Caco-2 (cell line): ENCODE measurements at regions of chr14 and their contacts with region 1.

Region 1: DNA sequence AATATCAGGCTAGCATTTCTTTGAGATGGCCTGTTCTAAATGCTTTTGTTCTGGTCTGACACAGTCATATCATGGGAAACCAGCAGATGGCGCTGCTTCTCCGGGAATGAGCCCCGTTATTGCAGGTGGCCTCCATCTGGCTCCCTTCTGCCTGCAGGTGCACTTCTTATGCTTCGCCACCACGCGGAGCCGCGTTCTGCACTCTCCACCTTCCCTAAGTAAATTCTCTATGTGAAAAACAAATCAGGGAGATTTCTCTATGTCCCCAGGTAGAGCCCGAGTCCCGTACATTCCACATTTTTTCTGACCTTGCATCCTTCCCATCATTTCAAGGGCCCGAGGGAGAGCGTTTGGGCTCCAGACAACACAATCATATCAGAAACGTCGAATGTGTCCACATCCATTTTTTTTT is 26.2 kb downstream of the GLRX5 start:
- DNase-seq: peak; percentile 86 to 91
- H3K4me3 ChIP-seq: no peak overlapping the region
- H3K4me3 Mint-ChIP-seq: no peak overlapping the region
- H3K27ac Mint-ChIP-seq: no peak overlapping the region
- H3K4me1 ChIP-seq: no peaks in the 10 kb centered on the region
- H3K4me1 Mint-ChIP-seq: no peaks in the 10 kb centered on the region
- H3K27me3 ChIP-seq: no peaks in the 10 kb centered on the region
- H3K27me3 Mint-ChIP-seq: no peaks in the 10 kb centered on the region
- CTCF ChIP-seq: peak; percentile 95 to 97

Region 2: DNA sequence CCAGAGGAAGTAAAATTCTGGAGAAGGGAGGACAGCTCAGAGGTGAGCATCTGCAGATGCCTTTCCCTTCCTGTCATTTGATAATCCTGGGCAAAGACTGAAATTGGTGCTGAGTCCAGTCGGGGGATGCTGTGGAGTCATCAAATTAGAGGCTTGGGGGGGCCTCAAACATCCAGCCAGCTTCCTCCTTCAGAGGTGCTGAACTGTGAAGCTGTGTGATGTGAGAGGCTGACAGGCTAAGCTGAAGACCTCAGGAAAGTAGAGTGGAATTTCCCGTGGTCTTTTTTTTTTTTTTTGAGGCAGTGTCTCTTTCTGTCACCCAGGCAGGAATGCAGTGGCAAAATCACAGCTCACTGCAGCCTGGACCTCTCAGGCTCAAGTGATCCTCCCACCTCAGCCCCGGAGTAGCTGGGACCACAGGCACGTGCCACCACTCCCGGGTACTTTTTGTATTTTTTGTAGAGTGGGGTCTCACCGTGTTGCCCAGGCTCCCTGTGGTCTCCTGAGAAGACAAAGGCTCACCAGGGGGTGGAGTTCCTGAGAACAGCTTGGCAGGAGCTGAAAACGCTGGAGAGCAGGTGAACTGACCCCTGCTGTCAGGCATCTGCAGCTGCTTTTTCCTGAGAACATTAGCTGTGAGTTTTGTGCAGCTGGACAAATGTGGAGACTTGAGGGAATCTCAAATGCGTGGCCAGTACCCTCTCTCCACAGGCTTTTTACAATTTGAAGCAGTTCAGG is 119.2 kb after region 1 on chr14:
- CTCF ChIA-PET with region 1: interaction called, 4 read pairs
- POLR2A ChIA-PET with region 1: no interaction called
- intact Hi-C with region 1: loop called (anchors 1 kb)
- DNase-seq: peak; percentile 44 to 49
- H3K4me3 ChIP-seq: no peak overlapping the region
- H3K4me3 Mint-ChIP-seq: no peak overlapping the region
- H3K27ac Mint-ChIP-seq: no peak overlapping the region
- H3K4me1 ChIP-seq: peaks cover 5% of the 10 kb centered on the region; the same call in 1 of the 2 replicates
- H3K4me1 Mint-ChIP-seq: no peaks in the 10 kb centered on the region
- H3K27me3 ChIP-seq: no peaks in the 10 kb centered on the region
- H3K27me3 Mint-ChIP-seq: peaks cover 12% of the 10 kb centered on the region
- CTCF ChIP-seq: peak; percentile 37 to 65

Region 3: GRCh38 chr14:95774265-95775160 is 213.5 kb after region 1 on chr14:
- CTCF ChIA-PET with region 1: interaction called, 3 read pairs
- POLR2A ChIA-PET with region 1: no interaction called
- intact Hi-C with region 1: loop called (anchors 1 kb)
- DNase-seq: peak; percentile 53 to 62
- H3K4me3 ChIP-seq: no peak overlapping the region
- H3K4me3 Mint-ChIP-seq: no peak overlapping the region
- H3K27ac Mint-ChIP-seq: no peak overlapping the region
- H3K4me1 ChIP-seq: no peaks in the 10 kb centered on the region
- H3K4me1 Mint-ChIP-seq: no peaks in the 10 kb centered on the region
- H3K27me3 ChIP-seq: no peaks in the 10 kb centered on the region
- H3K27me3 Mint-ChIP-seq: peaks cover 20% of the 10 kb centered on the region
- CTCF ChIP-seq: peak; percentile 75 to 79

Region 4: GRCh38 chr14:95850417-95850816 is 289.4 kb after region 1 on chr14:
- CTCF ChIA-PET with region 1: no interaction called
- POLR2A ChIA-PET with region 1: no interaction called
- intact Hi-C with region 1: no loop called
- DNase-seq: no peak
- H3K4me3 ChIP-seq: no peak overlapping the region
- H3K4me3 Mint-ChIP-seq: no peak overlapping the region
- H3K27ac Mint-ChIP-seq: no peak overlapping the region
- H3K4me1 ChIP-seq: no peaks in the 10 kb centered on the region
- H3K4me1 Mint-ChIP-seq: no peaks in the 10 kb centered on the region
- H3K27me3 ChIP-seq: no peaks in the 10 kb centered on the region
- H3K27me3 Mint-ChIP-seq: peaks cover 20% of the 10 kb centered on the region
- CTCF ChIP-seq: no peak

Region 5: GRCh38 chr14:95993768-95994592 is 433.0 kb after region 1 on chr14:
- CTCF ChIA-PET with region 1: no interaction called
- POLR2A ChIA-PET with region 1: no interaction called
- intact Hi-C with region 1: loop called (anchors 1 kb)
- DNase-seq: peak in 1 of 2 experiments; percentile 25
- H3K4me3 ChIP-seq: no peak overlapping the region
- H3K4me3 Mint-ChIP-seq: no peak overlapping the region
- H3K27ac Mint-ChIP-seq: no peak overlapping the region
- H3K4me1 ChIP-seq: no peaks in the 10 kb centered on the region
- H3K4me1 Mint-ChIP-seq: no peaks in the 10 kb centered on the region
- H3K27me3 ChIP-seq: no peaks in the 10 kb centered on the region
- H3K27me3 Mint-ChIP-seq: peaks cover 3% of the 10 kb centered on the region
- CTCF ChIP-seq: peak; percentile 76 to 79